Ovary (tissue), 10 donors: ENCODE measurements at regions of chr21 and their contacts with region 1.

Region 1: GRCh38 chr21:29372063-29372802 is 73.5 kb downstream of the BACH1 start:
- DNase-seq: peak; percentile 28 to 64 (median 35)
- H3K4me3 ChIP-seq: no peak overlapping the region
- H3K27ac ChIP-seq: no peak overlapping the region
- H3K4me1 ChIP-seq: no peaks in the 10 kb centered on the region
- H3K27me3 ChIP-seq: no peaks in the 10 kb centered on the region
- CTCF ChIP-seq: peak; percentile 70 to 78 (median 75)
- EP300 ChIP-seq: no peak
- POLR2A ChIP-seq: no peak

Region 2: DNA sequence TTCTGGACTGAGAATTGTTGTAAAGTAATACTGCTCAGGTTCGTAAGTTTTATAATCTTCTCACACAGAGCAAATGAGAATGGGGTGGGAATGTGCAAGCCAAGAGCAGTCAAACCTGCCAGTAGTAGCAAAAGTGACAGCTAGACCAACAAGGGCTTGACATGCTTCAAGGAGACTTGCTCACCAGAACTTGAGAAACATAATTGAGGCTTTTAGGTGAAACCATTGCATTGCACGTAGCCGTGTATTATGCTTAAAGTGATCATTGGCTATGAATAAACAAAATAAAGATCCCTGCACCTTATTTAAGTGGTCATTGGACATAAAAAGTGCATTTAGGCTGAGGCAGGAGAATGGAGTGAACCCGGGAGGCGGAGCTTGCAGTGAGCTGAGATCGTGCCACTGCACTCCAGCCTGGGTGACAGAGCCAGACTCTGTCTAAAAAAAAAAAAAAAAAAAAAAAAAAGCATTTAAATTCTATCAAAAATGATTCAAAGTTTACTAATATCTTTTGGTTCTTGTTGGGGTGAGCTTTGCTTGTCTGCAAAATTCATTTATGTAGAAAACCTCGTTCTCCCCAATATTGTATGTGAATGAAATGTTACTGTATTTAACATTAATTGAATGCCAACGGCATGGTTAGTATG is 287.0 kb before region 1 on chr21:
- intact Hi-C with region 1: loop called (anchors 5 to 10 kb)
- DNase-seq: no peak
- H3K4me3 ChIP-seq: no peak overlapping the region
- H3K27ac ChIP-seq: no peak overlapping the region
- H3K4me1 ChIP-seq: peaks cover 3% of the 10 kb centered on the region
- H3K27me3 ChIP-seq: no peaks in the 10 kb centered on the region
- CTCF ChIP-seq: no peak
- EP300 ChIP-seq: no peak
- POLR2A ChIP-seq: no peak

Region 3: GRCh38 chr21:29091032-29091431 is 281.2 kb before region 1 on chr21:
- intact Hi-C with region 1: loop called (anchors 5 to 10 kb)
- DNase-seq: no peak
- H3K4me3 ChIP-seq: no peak overlapping the region
- H3K27ac ChIP-seq: no peak overlapping the region
- H3K4me1 ChIP-seq: no peaks in the 10 kb centered on the region
- H3K27me3 ChIP-seq: no peaks in the 10 kb centered on the region
- CTCF ChIP-seq: no peak
- EP300 ChIP-seq: no peak
- POLR2A ChIP-seq: no peak

Region 4: GRCh38 chr21:29164325-29164942 is 207.8 kb before region 1 on chr21:
- intact Hi-C with region 1: loop called (anchors 2 to 10 kb)
- DNase-seq: no peak
- H3K4me3 ChIP-seq: no peak overlapping the region
- H3K27ac ChIP-seq: no peak overlapping the region
- H3K4me1 ChIP-seq: no peaks in the 10 kb centered on the region
- H3K27me3 ChIP-seq: peaks cover 2% of the 10 kb centered on the region
- CTCF ChIP-seq: peak; percentile 53 to 72 (median 64)
- EP300 ChIP-seq: no peak
- POLR2A ChIP-seq: no peak